Cardiac septum (tissue), 1 donor: ENCODE measurements at regions of chr5 and their contacts with region 1.

Region 1: GRCh38 chr5:143041972-143042770 is 272.0 kb downstream of the ARHGAP26 start:
- DNase-seq: no peak

Region 2: GRCh38 chr5:143023411-143024096 is 18.6 kb before region 1 on chr5:
- intact Hi-C with region 1: loop called (anchors 2 kb)
- DNase-seq: peak; percentile 87

Region 3: GRCh38 chr5:143066556-143067281 is 24.5 kb after region 1 on chr5:
- intact Hi-C with region 1: no loop called
- DNase-seq: no peak